Activated CD8-positive, alpha-beta T cell treated with anti-CD3 and anti-CD28 coated beads, Interleukin-2, amount 10 ng/mL, durations not matched to agents 7 days and 5 days (primary cell): ENCODE measurements at regions of chr7 and their contacts with region 1.

Region 1: GRCh38 chr7:6516387-6516983 is 34.8 kb downstream of the GRID2IP start:
- DNase-seq: peak; percentile 77
- ATAC-seq: peak; percentile 81
- H3K4me3 Mint-ChIP-seq: peak overlapping the region; percentile 53
- H3K27ac Mint-ChIP-seq: no peak overlapping the region
- H3K4me1 Mint-ChIP-seq: peaks cover 6% of the 10 kb centered on the region
- H3K27me3 Mint-ChIP-seq: no peaks in the 10 kb centered on the region

Region 2: GRCh38 chr7:6505685-6506574 is 10.6 kb before region 1 on chr7:
- CTCF ChIA-PET with region 1: interaction called, 14 read pairs
- POLR2A ChIA-PET with region 1: no interaction called
- DNase-seq: no peak
- ATAC-seq: no peak
- H3K4me3 Mint-ChIP-seq: no peak overlapping the region
- H3K27ac Mint-ChIP-seq: no peak overlapping the region
- H3K4me1 Mint-ChIP-seq: peaks cover 14% of the 10 kb centered on the region
- H3K27me3 Mint-ChIP-seq: peaks cover 6% of the 10 kb centered on the region

Region 3: GRCh38 chr7:6558837-6559236 is 42.4 kb after region 1 on chr7:
- CTCF ChIA-PET with region 1: interaction called, 16 read pairs
- POLR2A ChIA-PET with region 1: interaction called, 3 read pairs
- DNase-seq: peak; percentile 34
- ATAC-seq: no peak
- H3K4me3 Mint-ChIP-seq: no peak overlapping the region
- H3K27ac Mint-ChIP-seq: no peak overlapping the region
- H3K4me1 Mint-ChIP-seq: peaks cover 9% of the 10 kb centered on the region
- H3K27me3 Mint-ChIP-seq: peaks cover 3% of the 10 kb centered on the region

Region 4: DNA sequence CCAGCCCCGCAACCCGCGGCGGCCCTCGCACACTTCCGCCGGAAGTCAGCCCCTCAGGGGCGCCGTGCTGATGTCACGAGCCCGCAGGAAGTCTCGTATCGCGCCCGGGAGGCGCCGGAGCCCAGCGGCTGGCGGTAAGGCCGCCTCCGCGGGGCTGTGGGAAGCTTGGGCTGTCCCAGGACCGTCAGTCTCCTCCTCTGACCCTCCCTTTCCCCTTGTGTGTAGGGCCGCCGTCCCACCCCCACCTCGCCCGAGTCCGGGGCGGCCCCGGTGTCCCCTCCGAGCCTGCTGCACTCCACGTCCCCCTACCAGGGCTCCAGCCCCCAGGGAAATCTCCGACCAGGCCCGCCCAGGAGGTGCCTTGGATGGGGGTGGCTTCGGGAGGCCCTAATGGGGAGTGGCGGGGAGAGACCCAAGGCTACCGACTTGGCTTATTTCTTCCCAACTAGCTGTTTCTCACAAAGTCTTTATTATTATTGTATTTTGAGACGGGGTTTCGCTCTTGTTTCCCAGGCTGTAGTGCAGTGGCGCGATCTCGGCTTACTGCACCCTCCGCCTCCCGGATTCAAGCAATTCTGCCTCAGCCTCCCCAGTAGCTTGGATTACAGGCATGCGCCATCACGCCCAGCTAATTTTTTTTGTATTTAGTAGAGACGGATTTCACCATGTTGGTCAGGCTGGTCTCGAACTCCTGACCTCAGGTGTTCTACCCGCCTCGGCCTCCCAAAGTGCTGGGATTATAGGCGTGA is 61.1 kb after region 1 on chr7 and contains the start of gene ZDHHC4:
- CTCF ChIA-PET with region 1: interaction called, 11 read pairs
- POLR2A ChIA-PET with region 1: no interaction called
- DNase-seq: peak; percentile 92
- ATAC-seq: peak; percentile 97
- H3K4me3 Mint-ChIP-seq: peak within 1 kb of the TSS; percentile 85
- H3K27ac Mint-ChIP-seq: peak within 1 kb of the TSS; percentile 90
- H3K4me1 Mint-ChIP-seq: peaks cover 51% of the 10 kb centered on the region
- H3K27me3 Mint-ChIP-seq: no peaks in the 10 kb centered on the region
- total RNA-seq, gene ZDHHC4: 29.3 to 35.7 TPM